A673 (cell line): ENCODE measurements at regions of chr15 and their contacts with region 1.

Region 1: DNA sequence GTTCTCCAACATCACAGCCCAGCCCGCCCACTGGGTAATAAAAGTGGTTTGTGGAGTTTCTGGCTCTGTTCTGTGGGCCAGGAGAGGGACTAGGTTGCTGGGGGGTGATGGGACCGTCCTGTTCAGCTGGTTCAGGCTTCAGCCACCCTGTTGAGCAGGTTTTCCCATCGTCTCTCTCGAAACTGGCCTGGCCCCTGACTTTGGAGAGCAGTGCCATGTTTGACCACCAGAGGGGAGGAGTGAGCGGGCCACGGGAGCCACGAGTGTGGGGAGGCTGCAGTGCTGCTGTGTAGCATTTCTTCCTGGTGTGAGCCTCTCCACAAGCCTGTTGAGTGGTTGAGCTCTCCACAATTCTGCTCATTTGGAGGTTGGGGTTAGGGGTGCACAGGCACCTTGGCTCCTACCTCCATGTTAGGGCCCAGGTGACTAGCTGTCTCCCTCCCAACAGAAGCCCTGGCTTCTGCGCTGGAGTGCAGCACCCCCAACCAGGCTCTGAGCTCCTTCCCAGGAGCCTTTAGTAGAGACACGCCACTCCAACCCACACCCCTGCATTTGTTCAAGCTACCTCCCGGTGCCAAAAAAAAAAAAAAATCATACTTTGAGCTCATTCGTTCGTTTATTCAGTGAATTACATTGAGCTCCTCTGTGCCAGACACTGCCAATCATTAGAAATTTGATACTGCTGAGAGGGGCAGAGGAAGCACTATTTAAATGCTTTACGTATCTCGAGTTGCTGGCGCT is 13.9 kb downstream of the SPINT1 start:
- DNase-seq: peak; percentile 90
- H3K4me3 ChIP-seq: peak overlapping the region; percentile 25
- H3K27ac ChIP-seq: no peak overlapping the region
- H3K4me1 ChIP-seq: peaks cover 18% of the 10 kb centered on the region
- H3K27me3 ChIP-seq: no peaks in the 10 kb centered on the region
- CTCF ChIP-seq: peak; percentile 99

Region 2: GRCh38 chr15:40550341-40551037 is 307.3 kb before region 1 on chr15:
- CTCF ChIA-PET with region 1: interaction called, 12 read pairs
- POLR2A ChIA-PET with region 1: no interaction called
- intact Hi-C with region 1: no loop called
- DNase-seq: no peak
- H3K4me3 ChIP-seq: no peak overlapping the region
- H3K27ac ChIP-seq: no peak overlapping the region
- H3K4me1 ChIP-seq: peaks cover 7% of the 10 kb centered on the region
- H3K27me3 ChIP-seq: no peaks in the 10 kb centered on the region
- CTCF ChIP-seq: no peak

Region 3: DNA sequence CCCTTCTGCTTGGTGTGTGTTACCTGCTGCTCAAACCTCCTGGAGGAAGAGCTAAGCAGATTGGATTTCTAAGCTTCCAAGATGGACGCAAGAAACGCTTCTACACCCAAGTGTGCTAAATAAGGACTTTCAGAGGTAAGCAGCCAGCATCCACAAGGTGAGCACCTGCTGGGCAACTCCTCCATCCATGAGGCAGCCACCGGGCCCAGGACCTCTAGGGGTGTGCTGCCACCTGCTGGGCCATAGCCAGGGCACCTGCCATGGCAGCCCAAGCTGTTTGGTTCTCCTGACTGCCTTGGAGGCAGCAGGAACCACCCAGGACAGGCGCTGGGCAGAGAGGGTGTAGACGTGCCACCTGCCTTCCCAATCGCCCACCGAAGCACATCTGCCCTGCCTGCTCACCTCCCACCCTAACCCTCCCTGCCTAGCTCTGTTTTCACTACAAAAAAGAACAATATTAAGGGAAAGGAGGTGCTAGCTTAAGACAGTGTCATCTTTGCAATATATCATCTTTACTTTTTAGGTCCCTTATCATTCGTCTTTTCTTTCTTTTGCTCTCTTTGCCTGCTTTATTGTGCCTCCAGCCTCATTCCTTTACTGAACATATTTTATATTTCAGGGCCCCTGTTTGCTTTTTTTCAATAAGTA is 75.1 kb before region 1 on chr15:
- CTCF ChIA-PET with region 1: interaction called, 10 read pairs
- POLR2A ChIA-PET with region 1: no interaction called
- intact Hi-C with region 1: no loop called
- DNase-seq: peak; percentile 56
- H3K4me3 ChIP-seq: no peak overlapping the region
- H3K27ac ChIP-seq: no peak overlapping the region
- H3K4me1 ChIP-seq: peaks cover 9% of the 10 kb centered on the region
- H3K27me3 ChIP-seq: no peaks in the 10 kb centered on the region
- CTCF ChIP-seq: peak; percentile 68

Region 4: GRCh38 chr15:40843885-40844695 is 13.7 kb before region 1 on chr15 and contains the start of gene SPINT1:
- CTCF ChIA-PET with region 1: interaction called, 19 read pairs
- POLR2A ChIA-PET with region 1: no interaction called
- intact Hi-C with region 1: no loop called
- DNase-seq: no peak
- H3K4me3 ChIP-seq: peak within 1 kb of the TSS; percentile 61
- H3K27ac ChIP-seq: no peak within 1 kb of the TSS
- H3K4me1 ChIP-seq: peaks cover 3% of the 10 kb centered on the region
- H3K27me3 ChIP-seq: peaks cover 21% of the 10 kb centered on the region
- CTCF ChIP-seq: no peak
- total RNA-seq, gene SPINT1: 1.9 and 3.3 TPM in 2 replicates

Region 5: DNA sequence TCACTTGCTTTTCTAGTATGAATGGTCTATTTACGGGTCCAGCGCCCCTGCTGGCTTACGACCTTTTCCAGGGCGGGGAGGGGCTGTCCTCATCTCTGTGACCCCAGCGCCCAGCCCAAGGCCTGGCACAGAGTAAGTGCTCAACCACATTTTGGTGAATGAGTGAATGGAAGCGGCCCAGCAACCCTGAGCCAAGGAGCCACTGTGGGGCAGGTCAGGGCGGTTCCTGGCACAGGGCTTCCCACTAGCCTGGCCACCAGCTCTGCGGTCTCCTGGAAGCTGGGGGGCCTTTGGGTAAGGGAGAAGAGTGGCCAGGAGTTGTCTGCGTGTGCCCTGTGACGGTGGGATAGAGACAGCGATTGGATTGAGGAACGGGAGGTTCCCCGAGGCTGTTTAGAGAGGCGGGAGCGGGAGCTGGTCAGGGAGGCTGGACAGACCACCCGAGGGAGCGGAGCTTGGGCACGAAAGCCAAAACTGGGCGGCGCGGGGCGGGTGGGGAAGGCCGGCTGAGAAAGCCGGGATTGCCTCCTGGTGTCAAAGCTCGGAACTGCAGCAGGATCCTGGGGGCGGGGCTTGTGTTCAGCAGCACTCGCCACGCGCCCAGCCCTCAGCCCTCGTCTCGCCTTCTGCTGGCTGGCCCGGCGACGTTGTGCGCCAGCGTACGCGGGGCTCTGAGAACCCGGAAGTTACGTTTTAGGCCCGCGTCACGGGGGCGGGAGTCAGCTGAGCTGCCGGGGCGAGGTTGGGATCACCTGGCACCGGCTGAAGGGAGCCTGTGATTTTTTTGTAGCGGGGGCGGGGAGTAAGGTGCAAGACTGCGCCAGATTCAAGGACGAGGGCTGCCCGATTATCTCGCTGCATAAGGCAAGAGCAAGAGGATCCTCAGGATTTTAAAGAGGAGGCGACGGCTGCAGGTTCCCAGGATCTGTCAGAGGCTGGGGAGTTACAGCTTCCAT is 36.2 kb after region 1 on chr15 and contains the start of gene VPS18:
- CTCF ChIA-PET with region 1: interaction called, 103 read pairs
- POLR2A ChIA-PET with region 1: no interaction called
- intact Hi-C with region 1: loop called (anchors 1 kb)
- DNase-seq: peak; percentile 98
- H3K4me3 ChIP-seq: peak within 1 kb of the TSS; percentile 95
- H3K27ac ChIP-seq: peak within 1 kb of the TSS; percentile 79
- H3K4me1 ChIP-seq: peaks cover 6% of the 10 kb centered on the region
- H3K27me3 ChIP-seq: no peaks in the 10 kb centered on the region
- CTCF ChIP-seq: peak; percentile 87
- total RNA-seq, gene VPS18: 21.9 and 23.8 TPM in 2 replicates